Endothelial cell of umbilical vein (primary cell): ENCODE measurements at regions of chr1 and their contacts with region 1.

Region 1: DNA sequence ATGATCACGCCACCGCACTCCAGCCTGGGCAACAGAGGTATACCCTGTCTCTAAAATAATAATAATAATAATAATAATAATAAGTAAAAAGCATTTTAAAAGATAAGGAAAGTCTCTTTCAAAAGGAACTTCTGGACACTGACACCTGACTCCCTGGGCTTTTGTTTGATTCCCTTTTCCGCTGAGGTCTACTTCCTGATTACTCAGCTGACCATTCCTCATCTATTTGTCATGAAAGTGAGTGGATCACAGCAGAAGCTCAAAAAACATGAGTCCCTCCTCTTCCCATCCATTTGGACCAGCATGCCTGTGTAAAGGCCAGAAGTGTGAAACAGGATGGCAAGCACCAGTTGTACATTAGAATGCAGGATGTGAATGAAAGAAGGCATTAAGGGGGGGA is 61.1 kb upstream of the FBXO28 start:
- DNase-seq: peak; percentile 96
- H3K4me3 ChIP-seq: no peak overlapping the region
- H3K27ac ChIP-seq: peak overlapping the region; percentile 92
- H3K4me1 ChIP-seq: peaks cover 37% of the 10 kb centered on the region
- H3K27me3 ChIP-seq: no peaks in the 10 kb centered on the region
- CTCF ChIP-seq: no peak
- POLR2A ChIP-seq: peak; percentile 24

Region 2: DNA sequence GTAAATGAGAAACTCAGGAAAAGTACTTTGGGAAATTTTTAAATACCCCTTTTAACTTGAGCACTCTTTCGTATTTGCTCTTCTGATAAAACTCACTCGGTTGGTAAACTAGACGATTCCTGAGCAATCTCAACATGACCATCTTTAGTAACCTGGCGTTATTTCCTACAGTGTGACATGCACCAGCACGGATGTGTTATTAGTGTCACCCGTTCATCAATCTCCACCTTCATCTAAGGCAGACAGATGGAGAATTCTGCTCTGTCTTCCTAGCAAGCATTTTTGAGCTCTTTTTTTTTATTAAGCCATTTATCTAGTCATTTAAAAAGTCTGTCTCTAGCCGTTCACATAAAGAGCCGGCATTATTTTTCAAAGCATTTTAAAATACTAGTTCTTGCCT is 1082.7 kb before region 1 on chr1:
- CTCF ChIA-PET with region 1: no interaction called
- POLR2A ChIA-PET with region 1: no interaction called
- dilution Hi-C with region 1: no loop called
- intact Hi-C with region 1: no loop called
- DNase-seq: no peak
- H3K4me3 ChIP-seq: no peak overlapping the region
- H3K27ac ChIP-seq: no peak overlapping the region
- H3K4me1 ChIP-seq: no peaks in the 10 kb centered on the region
- H3K27me3 ChIP-seq: no peaks in the 10 kb centered on the region
- CTCF ChIP-seq: no peak
- POLR2A ChIP-seq: no peak

Region 3: GRCh38 chr1:223700942-223701637 is 351.7 kb before region 1 on chr1:
- CTCF ChIA-PET with region 1: interaction called, 13 read pairs
- POLR2A ChIA-PET with region 1: interaction called, 4 read pairs
- dilution Hi-C with region 1: no loop called
- intact Hi-C with region 1: loop called (anchors 1 kb)
- DNase-seq: peak; percentile 74
- H3K4me3 ChIP-seq: no peak overlapping the region
- H3K27ac ChIP-seq: peak overlapping the region; percentile 73
- H3K4me1 ChIP-seq: peaks cover 37% of the 10 kb centered on the region
- H3K27me3 ChIP-seq: no peaks in the 10 kb centered on the region
- CTCF ChIP-seq: no peak
- POLR2A ChIP-seq: peak; percentile 26

Region 4: DNA sequence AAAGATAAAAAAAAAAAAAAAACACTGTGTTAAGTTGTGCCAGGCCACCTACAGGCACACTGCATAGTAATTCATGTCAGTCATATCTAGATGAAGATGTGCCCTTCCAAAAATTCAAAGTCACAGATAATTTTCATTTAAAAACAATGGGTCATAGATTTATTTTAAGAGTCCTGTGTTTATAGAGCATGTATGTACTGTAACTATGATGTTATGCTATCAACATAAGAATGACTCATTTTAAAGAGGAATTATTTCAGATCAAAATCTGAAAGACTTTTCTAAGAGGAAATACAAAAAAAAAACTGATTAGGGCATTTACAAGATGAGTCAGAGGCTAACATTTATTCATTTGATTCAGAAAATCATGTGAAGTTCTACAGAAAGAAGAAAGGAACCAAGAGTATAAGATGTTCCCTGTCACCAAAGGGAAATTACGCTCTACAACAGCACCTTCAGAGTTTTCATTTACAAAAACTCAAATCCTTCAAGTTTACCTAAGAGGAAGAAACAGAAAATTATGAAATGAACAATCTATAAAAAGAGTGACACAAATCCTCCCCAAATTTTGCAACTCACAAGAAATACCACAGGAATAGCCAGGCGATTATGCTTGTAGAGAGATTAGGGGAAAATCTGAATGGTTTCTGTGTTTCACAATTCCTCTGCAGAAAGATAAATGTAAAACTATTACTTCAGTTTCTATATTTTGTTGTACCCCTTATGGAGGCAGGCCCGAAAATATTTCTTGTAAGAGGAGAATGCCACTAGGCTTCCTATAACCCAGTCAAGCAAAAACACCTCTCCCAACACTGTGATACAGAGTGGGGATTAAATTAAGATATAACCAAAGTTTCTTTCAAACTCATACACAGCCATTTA is 220.8 kb before region 1 on chr1:
- CTCF ChIA-PET with region 1: no interaction called
- POLR2A ChIA-PET with region 1: no interaction called
- dilution Hi-C with region 1: no loop called
- intact Hi-C with region 1: loop called (anchors 5 kb)
- DNase-seq: peak; percentile 76
- H3K4me3 ChIP-seq: peak overlapping the region in 1 of 3 experiments; percentile 38
- H3K27ac ChIP-seq: peak overlapping the region; percentile 86
- H3K4me1 ChIP-seq: peaks cover 56% of the 10 kb centered on the region
- H3K27me3 ChIP-seq: no peaks in the 10 kb centered on the region
- CTCF ChIP-seq: no peak
- POLR2A ChIP-seq: no peak

Region 5: GRCh38 chr1:224067621-224068457 is 15.1 kb after region 1 on chr1:
- CTCF ChIA-PET with region 1: interaction called, 45 read pairs
- POLR2A ChIA-PET with region 1: no interaction called
- dilution Hi-C with region 1: no loop called
- intact Hi-C with region 1: loop called (anchors 1 kb)
- DNase-seq: peak; percentile 52
- H3K4me3 ChIP-seq: no peak overlapping the region
- H3K27ac ChIP-seq: no peak overlapping the region
- H3K4me1 ChIP-seq: peaks cover 17% of the 10 kb centered on the region
- H3K27me3 ChIP-seq: no peaks in the 10 kb centered on the region
- CTCF ChIP-seq: no peak
- POLR2A ChIP-seq: no peak

Region 6: DNA sequence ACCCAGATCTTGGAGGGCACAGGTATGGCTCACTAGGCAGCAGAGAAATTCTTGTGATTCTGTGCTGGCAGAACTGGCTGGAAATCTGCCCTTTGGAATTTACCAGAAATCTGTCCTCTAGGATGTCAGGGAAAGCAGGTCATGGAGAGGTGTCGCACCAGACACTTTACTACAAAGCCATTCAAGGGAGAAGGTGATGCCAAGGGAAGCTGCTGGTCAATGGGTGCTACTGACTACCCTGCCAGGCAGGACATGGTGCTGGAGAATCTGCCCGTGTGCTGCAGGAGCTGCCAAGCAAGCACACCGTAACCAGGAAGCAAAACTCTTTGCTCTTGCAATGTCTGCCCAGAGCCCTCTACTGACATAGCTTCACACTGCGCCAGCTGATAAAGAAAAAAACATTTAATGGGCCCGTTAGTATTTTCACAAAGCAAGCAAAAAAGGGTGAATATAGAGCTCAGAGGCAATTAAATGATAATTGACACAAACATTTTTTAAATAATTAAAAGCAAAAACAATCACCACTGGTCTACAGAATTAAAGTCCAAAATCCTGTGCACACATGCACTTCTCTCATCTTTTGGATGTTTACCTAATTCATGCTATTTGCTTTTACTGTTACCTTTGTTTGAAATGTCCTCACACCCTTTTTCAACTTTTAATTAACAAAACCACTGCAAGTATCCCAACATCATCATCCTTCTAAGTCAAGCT is 54.0 kb after region 1 on chr1:
- CTCF ChIA-PET with region 1: interaction called, 62 read pairs
- POLR2A ChIA-PET with region 1: no interaction called
- dilution Hi-C with region 1: no loop called
- intact Hi-C with region 1: loop called (anchors 2 kb)
- DNase-seq: peak; percentile 67
- H3K4me3 ChIP-seq: no peak overlapping the region
- H3K27ac ChIP-seq: no peak overlapping the region
- H3K4me1 ChIP-seq: peaks cover 9% of the 10 kb centered on the region
- H3K27me3 ChIP-seq: no peaks in the 10 kb centered on the region
- CTCF ChIP-seq: peak; percentile 49 to 58
- POLR2A ChIP-seq: no peak